Pancreas (tissue), 10 donors: ENCODE measurements at regions of chr16 and their contacts with region 1.

Region 1: DNA sequence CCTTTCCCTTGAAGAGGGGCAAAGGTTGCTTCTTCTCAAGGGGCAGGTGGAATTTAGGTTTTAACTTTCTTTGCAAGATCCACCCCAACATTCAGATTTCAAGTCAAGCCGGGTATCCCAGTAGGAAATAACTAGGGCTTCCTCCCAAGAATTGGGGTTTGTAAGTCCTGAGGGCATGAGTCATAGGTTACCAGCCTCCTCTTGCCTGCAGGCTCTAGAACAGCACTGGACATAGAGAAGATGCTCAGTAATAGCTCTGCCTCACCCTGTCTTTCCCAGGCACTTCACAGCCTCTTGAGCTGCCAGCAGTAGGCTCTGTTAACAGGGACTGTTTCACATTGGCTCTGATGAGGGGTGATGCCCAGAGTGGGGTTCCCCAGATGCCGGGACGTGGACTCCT is 35.8 kb upstream of the ZFP90 start:
- DNase-seq: peak in 1 of 6 donors; percentile 10
- ATAC-seq: no peak
- H3K4me3 ChIP-seq: no peak overlapping the region
- H3K27ac ChIP-seq: no peak overlapping the region
- H3K4me1 ChIP-seq: no peaks in the 10 kb centered on the region
- H3K27me3 ChIP-seq: no peaks in the 10 kb centered on the region
- CTCF ChIP-seq: no peak

Region 2: DNA sequence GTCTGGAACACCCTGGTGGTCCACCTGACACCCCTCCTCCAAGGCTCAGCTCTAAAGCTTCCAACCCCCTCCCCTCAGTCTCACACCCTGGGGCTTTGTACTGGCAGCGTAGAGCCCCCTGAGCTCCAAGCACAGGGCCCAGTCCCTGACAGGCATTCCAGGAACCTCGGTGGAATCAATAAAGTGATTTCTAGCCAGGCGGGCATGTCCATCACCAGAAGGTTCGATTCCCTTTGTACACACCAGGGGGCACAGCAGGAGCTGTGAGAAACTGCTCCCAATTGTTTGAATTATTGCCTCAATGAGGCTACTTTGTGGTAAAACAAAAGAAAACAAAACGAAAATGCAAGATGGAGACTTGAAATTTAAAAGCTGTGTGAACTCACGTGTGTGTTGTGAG is 106.9 kb before region 1 on chr16:
- intact Hi-C with region 1: loop called (anchors 5 to 10 kb)
- DNase-seq: peak in 4 of 6 donors; percentile 63 to 81 (median 74)
- ATAC-seq: peak; percentile 92 to 95 (median 94)
- H3K4me3 ChIP-seq: no peak overlapping the region
- H3K27ac ChIP-seq: no peak overlapping the region
- H3K4me1 ChIP-seq: no peaks in the 10 kb centered on the region
- H3K27me3 ChIP-seq: no peaks in the 10 kb centered on the region
- CTCF ChIP-seq: peak; percentile 53 to 74 (median 71)